ENCODE measurements at regions of chr14 and their contacts with region 1.

Region 1: GRCh38 chr14:23281247-23281646 is 4.7 kb downstream of the HOMEZ start:
- DNase-seq: no peak
- H3K4me3 ChIP-seq: no peak overlapping the region
- H3K27ac ChIP-seq: no peak overlapping the region
- H3K4me1 ChIP-seq: peaks cover 2 to 7% (median 5%) of the 10 kb centered on the region in 4 experiments; a peak in 4 of 7 replicates
- H3K27me3 ChIP-seq: peaks cover 0 to 4% (median 1%) of the 10 kb centered on the region in 4 experiments; a peak in 1 of 7 replicates
- CTCF ChIP-seq: no peak
- EP300 ChIP-seq: no peak
- POLR2A ChIP-seq: no peak
- RAD21 ChIP-seq: no peak

Region 2: DNA sequence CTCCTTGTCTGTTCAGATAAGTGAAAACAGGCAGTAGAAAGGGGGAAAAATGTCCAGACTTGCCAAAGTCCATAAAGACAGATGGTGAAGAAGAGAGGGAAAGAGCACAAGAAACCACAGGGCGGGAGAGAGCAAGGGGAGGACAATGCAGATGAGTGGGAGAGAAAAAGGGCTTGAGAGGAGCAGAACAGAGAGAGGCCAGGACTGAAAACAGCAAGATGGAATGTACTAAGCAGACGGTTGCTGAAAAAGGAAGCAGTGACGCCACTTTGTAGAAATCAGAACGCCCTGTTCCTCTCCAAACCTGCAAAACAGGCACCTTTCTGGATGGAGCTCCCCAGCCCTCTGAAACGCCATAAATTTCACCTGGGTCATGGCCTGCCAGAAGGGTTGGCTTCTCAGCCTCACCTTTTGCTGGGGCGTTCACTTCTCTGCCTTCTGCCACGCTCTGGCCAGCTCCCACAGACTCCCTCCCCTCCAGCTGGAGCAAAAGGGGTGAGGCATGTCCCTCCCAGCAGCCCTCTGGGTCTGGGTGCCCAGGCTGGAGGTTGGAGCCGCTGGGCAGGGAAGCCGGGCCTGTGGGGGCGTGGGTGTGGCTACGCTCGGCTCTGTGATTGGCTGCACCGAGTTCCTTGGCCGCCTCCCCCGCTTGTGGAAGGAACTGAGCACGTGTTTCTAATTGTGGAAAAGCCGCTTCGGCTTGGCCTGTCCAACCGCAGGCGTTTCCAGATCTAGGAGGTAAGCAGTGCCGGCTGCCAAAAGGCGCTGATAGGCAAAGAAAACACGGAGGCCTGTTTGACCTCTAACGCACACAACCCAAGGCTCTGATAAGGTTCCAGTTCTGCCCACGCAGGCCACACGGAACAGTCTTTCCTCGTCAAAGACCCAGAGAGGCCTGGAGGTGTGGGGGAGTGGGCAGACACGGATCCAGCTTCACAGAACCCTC is 127.1 kb before region 1 on chr14:
- CTCF ChIA-PET with region 1: no interaction called
- POLR2A ChIA-PET with region 1: no interaction called
- DNase-seq: peak in 1 of 2 experiments; percentile 80
- H3K4me3 ChIP-seq: no peak overlapping the region
- H3K27ac ChIP-seq: no peak overlapping the region
- H3K4me1 ChIP-seq: peaks cover 3 to 18% (median 11%) of the 10 kb centered on the region in 4 experiments
- H3K27me3 ChIP-seq: no peaks in the 10 kb centered on the region
- CTCF ChIP-seq: no peak
- EP300 ChIP-seq: no peak
- POLR2A ChIP-seq: peak in 1 of 2 experiments; percentile 44; a peak in 1 of 3 replicates
- RAD21 ChIP-seq: no peak

Region 3: DNA sequence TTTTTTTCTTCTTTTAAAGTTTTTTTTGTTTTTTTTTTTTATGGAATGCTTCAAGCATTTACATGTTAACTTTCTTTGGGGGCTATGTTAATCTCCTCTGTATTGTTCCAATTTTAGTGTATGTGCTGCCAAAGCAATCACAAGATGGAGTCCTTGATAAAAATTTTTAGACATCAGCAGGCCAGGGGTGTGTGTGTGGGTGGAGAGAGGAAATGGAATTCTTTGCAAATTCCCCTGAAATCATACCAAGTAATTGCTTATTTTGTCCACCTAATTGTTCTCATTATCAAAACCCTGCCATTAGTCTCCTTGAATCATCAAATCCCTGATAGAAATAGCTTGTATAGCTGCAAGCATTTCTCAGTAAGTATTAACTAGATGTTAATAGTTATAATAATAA is 21.8 kb before region 1 on chr14:
- CTCF ChIA-PET with region 1: interaction called, 10 read pairs
- POLR2A ChIA-PET with region 1: interaction called, 3 read pairs
- DNase-seq: no peak
- H3K4me3 ChIP-seq: no peak overlapping the region
- H3K27ac ChIP-seq: no peak overlapping the region
- H3K4me1 ChIP-seq: peaks cover 0 to 6% (median 0%) of the 10 kb centered on the region in 4 experiments; a peak in 1 of 7 replicates
- H3K27me3 ChIP-seq: no peaks in the 10 kb centered on the region
- CTCF ChIP-seq: no peak
- EP300 ChIP-seq: no peak
- POLR2A ChIP-seq: no peak
- RAD21 ChIP-seq: no peak

Region 4: GRCh38 chr14:23269193-23269592 is 12.1 kb before region 1 on chr14:
- CTCF ChIA-PET with region 1: interaction called, 10 read pairs
- POLR2A ChIA-PET with region 1: interaction called, 8 read pairs
- DNase-seq: no peak
- H3K4me3 ChIP-seq: no peak overlapping the region
- H3K27ac ChIP-seq: no peak overlapping the region
- H3K4me1 ChIP-seq: no peaks in the 10 kb centered on the region
- H3K27me3 ChIP-seq: peaks cover 1 to 21% (median 4%) of the 10 kb centered on the region in 4 experiments; a peak in 4 of 7 replicates
- CTCF ChIP-seq: no peak
- EP300 ChIP-seq: no peak
- POLR2A ChIP-seq: no peak
- RAD21 ChIP-seq: no peak

Measured in H1 (cell line).